Caco-2 (cell line): ENCODE measurements at regions of chr6 and their contacts with region 1.

Region 1: DNA sequence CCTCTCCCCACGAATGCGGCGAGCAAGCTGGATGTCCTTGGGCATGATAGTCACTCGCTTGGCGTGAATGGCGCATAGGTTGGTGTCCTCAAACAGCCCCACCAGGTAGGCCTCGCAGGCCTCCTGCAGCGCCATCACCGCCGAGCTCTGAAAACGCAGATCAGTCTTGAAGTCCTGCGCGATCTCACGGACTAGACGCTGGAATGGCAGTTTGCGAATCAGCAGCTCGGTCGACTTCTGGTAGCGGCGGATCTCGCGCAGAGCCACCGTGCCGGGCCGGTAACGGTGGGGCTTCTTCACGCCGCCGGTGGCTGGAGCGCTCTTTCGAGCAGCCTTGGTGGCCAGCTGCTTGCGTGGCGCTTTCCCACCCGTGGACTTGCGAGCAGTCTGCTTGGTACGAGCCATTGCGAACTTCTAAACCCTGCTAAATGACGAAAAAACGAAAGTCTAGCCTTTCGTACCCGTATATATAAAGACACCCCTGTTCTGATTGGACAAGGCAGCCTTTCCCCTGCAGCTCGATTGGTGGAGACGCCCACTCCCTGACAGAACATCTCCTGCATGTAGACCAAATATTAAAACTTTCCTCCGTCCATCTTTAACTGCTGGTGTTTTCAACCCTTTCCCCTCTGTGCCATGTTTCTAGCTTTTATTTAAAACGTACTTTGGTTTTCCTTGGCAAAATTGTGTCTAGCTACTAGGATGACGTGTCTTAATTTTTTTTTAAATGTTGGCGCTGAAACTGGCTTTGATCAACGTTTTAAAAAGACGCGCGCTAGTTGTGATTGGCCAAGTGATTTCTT is 109.8 kb downstream of the HFE start:
- DNase-seq: peak; percentile 89 to 92
- H3K4me3 ChIP-seq: peak overlapping the region; percentile 63
- H3K4me3 Mint-ChIP-seq: peak overlapping the region; percentile 87
- H3K27ac Mint-ChIP-seq: peak overlapping the region; percentile 99
- H3K4me1 ChIP-seq: peaks cover 4% of the 10 kb centered on the region; the same call in 1 of the 2 replicates
- H3K4me1 Mint-ChIP-seq: peaks cover 27% of the 10 kb centered on the region
- H3K27me3 ChIP-seq: no peaks in the 10 kb centered on the region
- H3K27me3 Mint-ChIP-seq: peaks cover 3% of the 10 kb centered on the region
- CTCF ChIP-seq: no peak

Region 2: DNA sequence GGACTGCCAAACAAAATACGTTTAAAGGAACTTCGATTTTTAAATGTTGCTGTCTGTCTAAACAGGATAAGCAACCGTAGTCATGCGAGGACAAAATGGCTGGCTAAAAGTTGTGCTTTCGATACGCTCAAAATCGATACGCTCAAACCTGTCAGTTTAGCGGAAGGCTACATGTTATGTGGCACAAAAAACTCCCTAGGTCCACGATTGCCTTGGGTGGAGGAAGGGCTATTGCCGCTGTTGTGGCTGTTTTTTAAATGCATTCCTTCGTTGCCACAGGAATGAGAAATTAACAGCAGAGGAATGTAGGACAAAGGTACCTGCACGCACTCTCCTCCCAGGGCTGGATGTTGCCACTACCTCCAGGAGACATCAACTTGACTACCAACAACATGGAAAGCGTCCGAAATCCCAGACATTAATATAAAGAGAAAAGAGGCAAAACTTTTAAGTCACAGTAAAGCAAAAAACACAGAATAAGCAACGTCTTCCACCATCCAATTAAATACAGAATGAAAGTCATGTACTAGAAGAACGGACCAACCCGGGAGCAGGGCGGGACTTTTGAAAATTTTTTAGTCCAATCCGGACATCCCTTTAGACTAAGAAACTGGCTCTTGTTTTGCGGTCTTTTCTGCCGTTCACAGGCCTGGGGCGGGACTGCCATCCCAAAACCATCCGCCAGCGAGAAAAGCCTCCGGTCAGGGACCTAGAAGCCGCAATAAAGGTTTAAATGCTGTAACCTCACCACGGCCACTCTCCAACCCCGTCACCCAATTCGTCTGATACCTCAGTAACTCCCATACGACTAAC is 142.0 kb before region 1 on chr6:
- CTCF ChIA-PET with region 1: no interaction called
- POLR2A ChIA-PET with region 1: no interaction called
- intact Hi-C with region 1: loop called (anchors 5 kb)
- DNase-seq: peak; percentile 87 to 90
- H3K4me3 ChIP-seq: peak overlapping the region; percentile 64
- H3K4me3 Mint-ChIP-seq: peak overlapping the region; percentile 83
- H3K27ac Mint-ChIP-seq: peak overlapping the region; percentile 93
- H3K4me1 ChIP-seq: peaks cover 8% of the 10 kb centered on the region
- H3K4me1 Mint-ChIP-seq: peaks cover 6% of the 10 kb centered on the region
- H3K27me3 ChIP-seq: no peaks in the 10 kb centered on the region
- H3K27me3 Mint-ChIP-seq: no peaks in the 10 kb centered on the region
- CTCF ChIP-seq: peak in 1 of 2 experiments; percentile 14

Region 3: DNA sequence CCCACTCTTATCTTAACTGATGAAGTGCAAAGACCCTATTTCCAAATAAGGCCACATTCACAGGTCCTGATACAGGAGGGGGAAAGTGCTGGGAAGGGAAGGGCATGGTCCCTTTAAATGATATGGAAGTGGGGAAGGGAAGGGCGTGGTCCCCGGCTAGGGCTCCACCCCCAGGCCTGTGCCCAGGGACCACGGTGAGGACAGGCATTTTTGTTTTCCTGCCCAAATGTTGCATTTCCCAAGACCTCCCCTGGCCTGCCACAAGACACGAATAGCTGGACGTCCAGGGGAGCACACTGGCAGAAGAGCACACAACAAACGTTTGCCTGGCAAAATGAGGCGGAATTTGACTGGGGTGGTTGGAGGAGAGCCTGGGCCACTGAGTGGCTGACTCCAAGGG is 125.9 kb before region 1 on chr6:
- CTCF ChIA-PET with region 1: no interaction called
- POLR2A ChIA-PET with region 1: no interaction called
- intact Hi-C with region 1: no loop called
- DNase-seq: no peak
- H3K4me3 ChIP-seq: no peak overlapping the region
- H3K4me3 Mint-ChIP-seq: no peak overlapping the region
- H3K27ac Mint-ChIP-seq: no peak overlapping the region
- H3K4me1 ChIP-seq: peaks cover 50% of the 10 kb centered on the region
- H3K4me1 Mint-ChIP-seq: peaks cover 36% of the 10 kb centered on the region
- H3K27me3 ChIP-seq: no peaks in the 10 kb centered on the region
- H3K27me3 Mint-ChIP-seq: no peaks in the 10 kb centered on the region
- CTCF ChIP-seq: no peak

Region 4: DNA sequence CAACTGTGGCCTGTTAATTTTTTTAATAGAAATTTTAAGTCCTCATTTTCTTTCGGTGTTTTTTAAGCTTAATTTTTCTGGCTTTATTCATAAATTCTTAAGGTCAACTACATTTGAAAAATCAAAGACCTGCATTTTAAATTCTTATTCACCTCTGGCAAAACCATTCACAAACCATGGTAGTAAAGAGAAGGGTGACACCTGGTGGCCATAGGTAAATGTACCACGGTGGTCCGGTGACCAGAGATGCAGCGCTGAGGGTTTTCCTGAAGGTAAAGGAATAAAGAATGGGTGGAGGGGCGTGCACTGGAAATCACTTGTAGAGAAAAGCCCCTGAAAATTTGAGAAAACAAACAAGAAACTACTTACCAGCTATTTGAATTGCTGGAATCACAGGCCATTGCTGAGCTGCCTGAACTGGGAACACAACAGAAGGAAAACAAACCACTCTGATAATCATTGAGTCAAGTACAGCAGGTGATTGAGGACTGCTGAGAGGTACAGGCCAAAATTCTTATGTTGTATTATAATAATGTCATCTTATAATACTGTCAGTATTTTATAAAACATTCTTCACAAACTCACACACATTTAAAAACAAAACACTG is 99.7 kb before region 1 on chr6:
- CTCF ChIA-PET with region 1: no interaction called
- POLR2A ChIA-PET with region 1: no interaction called
- intact Hi-C with region 1: no loop called
- DNase-seq: peak; percentile 67 to 73
- H3K4me3 ChIP-seq: no peak overlapping the region
- H3K4me3 Mint-ChIP-seq: no peak overlapping the region
- H3K27ac Mint-ChIP-seq: peak overlapping the region; percentile 33
- H3K4me1 ChIP-seq: peaks cover 13% of the 10 kb centered on the region
- H3K4me1 Mint-ChIP-seq: peaks cover 8% of the 10 kb centered on the region
- H3K27me3 ChIP-seq: no peaks in the 10 kb centered on the region
- H3K27me3 Mint-ChIP-seq: no peaks in the 10 kb centered on the region
- CTCF ChIP-seq: peak; percentile 76 to 80

Region 5: GRCh38 chr6:26156076-26156849 is 40.8 kb before region 1 on chr6:
- CTCF ChIA-PET with region 1: no interaction called
- POLR2A ChIA-PET with region 1: interaction called, 115 read pairs
- intact Hi-C with region 1: loop called (anchors 2 kb)
- DNase-seq: peak; percentile 86 to 93
- H3K4me3 ChIP-seq: peak overlapping the region; percentile 64
- H3K4me3 Mint-ChIP-seq: peak overlapping the region; percentile 86
- H3K27ac Mint-ChIP-seq: peak overlapping the region; percentile 98
- H3K4me1 ChIP-seq: peaks cover 10% of the 10 kb centered on the region
- H3K4me1 Mint-ChIP-seq: peaks cover 45% of the 10 kb centered on the region
- H3K27me3 ChIP-seq: no peaks in the 10 kb centered on the region
- H3K27me3 Mint-ChIP-seq: peaks cover 15% of the 10 kb centered on the region
- CTCF ChIP-seq: no peak

Region 6: DNA sequence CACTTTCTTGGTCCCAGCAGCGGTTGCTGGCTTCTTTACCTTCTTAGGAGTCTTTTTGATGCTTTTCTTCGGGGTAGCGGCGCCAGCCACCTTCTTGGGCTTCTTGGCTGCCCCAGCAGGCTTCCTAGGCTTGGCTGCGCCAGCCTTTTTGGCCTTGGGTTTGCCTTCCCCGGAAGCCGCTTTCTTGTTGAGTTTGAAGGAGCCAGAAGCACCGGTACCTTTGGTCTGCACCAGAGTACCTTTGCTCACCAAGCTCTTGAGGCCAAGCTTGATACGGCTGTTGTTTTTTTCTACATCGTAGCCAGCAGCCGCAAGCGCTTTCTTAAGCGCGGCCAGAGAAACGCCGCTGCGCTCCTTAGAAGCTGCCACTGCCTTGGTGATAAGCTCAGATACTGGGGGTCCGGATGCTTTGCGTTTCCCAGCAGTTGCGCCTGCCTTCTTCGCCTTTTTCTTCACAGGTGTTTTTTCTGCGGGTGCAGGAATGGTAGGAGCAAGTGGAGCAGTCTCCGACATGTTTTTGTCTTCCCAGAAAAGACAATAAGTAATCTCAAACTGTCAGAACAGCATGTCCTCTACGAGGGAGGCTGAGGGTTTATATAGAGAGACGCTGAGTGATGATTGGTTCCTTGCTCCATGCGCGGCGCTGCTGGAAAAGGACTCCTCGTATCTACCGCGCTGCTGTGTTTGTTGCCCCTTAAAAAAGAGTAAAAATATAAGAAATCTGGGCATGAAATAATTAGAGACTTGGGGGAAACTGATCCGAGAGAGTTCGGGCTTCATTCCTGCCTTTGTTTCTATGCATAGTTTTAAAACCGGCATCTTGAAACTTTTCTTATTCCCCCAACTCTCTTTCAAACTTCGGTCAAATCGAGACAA is 37.6 kb after region 1 on chr6:
- CTCF ChIA-PET with region 1: no interaction called
- POLR2A ChIA-PET with region 1: interaction called, 11 read pairs
- intact Hi-C with region 1: no loop called
- DNase-seq: peak; percentile 79 to 81
- H3K4me3 ChIP-seq: peak overlapping the region; percentile 52
- H3K4me3 Mint-ChIP-seq: peak overlapping the region; percentile 76
- H3K27ac Mint-ChIP-seq: peak overlapping the region; percentile 92
- H3K4me1 ChIP-seq: peaks cover 11% of the 10 kb centered on the region; the same call in 1 of the 2 replicates
- H3K4me1 Mint-ChIP-seq: no peaks in the 10 kb centered on the region
- H3K27me3 ChIP-seq: no peaks in the 10 kb centered on the region
- H3K27me3 Mint-ChIP-seq: no peaks in the 10 kb centered on the region
- CTCF ChIP-seq: no peak

Region 7: GRCh38 chr6:27146706-27147505 is 949.9 kb after region 1 on chr6:
- CTCF ChIA-PET with region 1: no interaction called
- POLR2A ChIA-PET with region 1: interaction called, 12 read pairs
- intact Hi-C with region 1: no loop called
- DNase-seq: peak; percentile 89 to 93
- H3K4me3 ChIP-seq: peak overlapping the region; percentile 69
- H3K4me3 Mint-ChIP-seq: no peak overlapping the region
- H3K27ac Mint-ChIP-seq: no peak overlapping the region
- H3K4me1 ChIP-seq: no peaks in the 10 kb centered on the region
- H3K4me1 Mint-ChIP-seq: peaks cover 8% of the 10 kb centered on the region
- H3K27me3 ChIP-seq: no peaks in the 10 kb centered on the region
- H3K27me3 Mint-ChIP-seq: no peaks in the 10 kb centered on the region
- CTCF ChIP-seq: no peak

Region 8: GRCh38 chr6:27893059-27893835 is 1696.2 kb after region 1 on chr6:
- CTCF ChIA-PET with region 1: no interaction called
- POLR2A ChIA-PET with region 1: interaction called, 11 read pairs
- intact Hi-C with region 1: loop called (anchors 5 kb)
- DNase-seq: peak; percentile 95 to 96
- H3K4me3 ChIP-seq: peak overlapping the region; percentile 82
- H3K4me3 Mint-ChIP-seq: no peak overlapping the region
- H3K27ac Mint-ChIP-seq: no peak overlapping the region
- H3K4me1 ChIP-seq: peaks cover 21% of the 10 kb centered on the region
- H3K4me1 Mint-ChIP-seq: peaks cover 39% of the 10 kb centered on the region
- H3K27me3 ChIP-seq: no peaks in the 10 kb centered on the region
- H3K27me3 Mint-ChIP-seq: peaks cover 10% of the 10 kb centered on the region
- CTCF ChIP-seq: no peak